CD14-positive monocyte (primary cell): ENCODE measurements at regions of chr6 and their contacts with region 1.

Region 1: DNA sequence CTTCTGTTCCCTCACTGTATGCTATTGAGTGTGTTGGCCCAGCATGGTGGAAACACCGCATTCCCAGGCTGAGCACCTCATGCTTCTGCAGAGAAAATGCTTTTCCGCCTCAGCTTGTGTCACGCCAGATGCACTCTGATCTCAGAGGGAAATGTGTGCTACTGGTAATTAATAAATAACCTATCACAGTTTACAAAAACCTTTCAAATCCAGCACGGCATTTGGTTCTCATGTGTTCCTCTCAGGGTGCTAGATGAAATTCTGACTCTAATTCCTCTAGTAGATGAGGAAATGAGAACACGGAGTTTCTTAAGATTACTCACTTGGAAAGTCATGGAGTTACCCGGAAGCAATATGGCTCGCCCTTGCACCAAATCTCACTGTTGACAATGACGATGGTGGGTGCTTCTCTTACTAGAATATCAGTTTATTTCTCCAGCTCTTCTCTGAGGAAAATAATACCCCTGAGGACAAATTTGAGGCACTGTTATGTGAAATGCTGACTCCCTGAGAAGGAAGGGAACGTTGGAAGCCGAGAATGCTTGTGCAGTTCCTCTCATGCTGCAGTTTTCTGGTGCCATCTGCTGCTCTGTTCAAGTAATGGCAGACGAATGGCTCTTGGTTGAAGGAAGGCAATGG is 116.6 kb downstream of the RNF144B start:
- DNase-seq: peak; percentile 59 to 85 (median 81)
- H3K4me3 ChIP-seq: peak overlapping the region; percentile 19 to 67 (median 63)
- H3K4me3 Mint-ChIP-seq: peak overlapping the region; percentile 73 to 89
- H3K27ac ChIP-seq: peak overlapping the region; percentile 75 to 87
- H3K27ac Mint-ChIP-seq: peak overlapping the region; percentile 92 to 99 (median 97)
- H3K4me1 ChIP-seq: peaks cover 30 to 33% of the 10 kb centered on the region in 2 donors
- H3K4me1 Mint-ChIP-seq: peaks cover 36% of the 10 kb centered on the region
- H3K27me3 ChIP-seq: no peaks in the 10 kb centered on the region
- H3K27me3 Mint-ChIP-seq: no peaks in the 10 kb centered on the region
- CTCF ChIP-seq: peak; percentile 94

Region 2: DNA sequence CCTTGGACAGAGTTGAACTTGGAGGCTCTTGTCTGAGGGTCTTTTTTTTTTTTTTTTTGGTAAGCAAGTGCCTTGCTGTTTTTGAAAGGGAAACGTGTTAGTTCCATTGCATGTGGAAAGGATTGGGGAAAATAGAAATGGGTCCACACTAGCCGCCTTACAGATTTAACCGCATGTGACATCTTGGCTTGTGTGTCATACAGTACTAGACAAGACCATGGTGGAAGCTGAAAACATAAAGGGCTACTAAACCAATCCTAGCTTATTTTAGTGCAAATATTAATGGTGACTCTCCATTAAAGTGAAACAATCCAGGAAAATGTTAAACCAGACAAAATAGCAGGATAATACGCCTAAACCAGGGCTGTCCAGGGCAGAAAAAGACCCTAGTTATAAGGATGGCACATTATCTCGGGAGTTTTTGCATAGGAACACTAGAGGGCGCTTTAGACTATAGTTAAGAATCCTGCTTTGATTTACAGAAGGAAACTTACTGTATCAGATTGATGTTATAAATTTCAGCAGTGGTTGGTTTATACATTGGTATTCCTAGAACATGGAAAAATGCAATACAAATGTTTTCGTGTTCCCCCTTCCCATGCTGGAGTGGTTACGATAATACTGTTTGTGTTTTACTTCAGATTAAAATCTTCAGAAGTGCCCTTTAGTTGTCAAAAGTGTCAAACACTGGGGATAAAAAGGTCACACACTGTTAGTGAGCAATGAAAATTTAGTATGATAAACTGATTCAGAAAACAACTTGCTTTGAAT is 179.6 kb before region 1 on chr6:
- intact Hi-C with region 1: loop called (anchors 2 kb)
- DNase-seq: peak; percentile 40 to 77 (median 64)
- H3K4me3 ChIP-seq: no peak overlapping the region
- H3K4me3 Mint-ChIP-seq: no peak overlapping the region
- H3K27ac ChIP-seq: no peak overlapping the region
- H3K27ac Mint-ChIP-seq: peak overlapping the region in 3 of 7 donors; percentile 27 to 63 (median 33)
- H3K4me1 ChIP-seq: peaks cover 32 to 36% of the 10 kb centered on the region in 2 donors
- H3K4me1 Mint-ChIP-seq: peaks cover 35% of the 10 kb centered on the region
- H3K27me3 ChIP-seq: no peaks in the 10 kb centered on the region
- H3K27me3 Mint-ChIP-seq: peaks cover 0 to 2% (median 0%) of the 10 kb centered on the region in 3 donors
- CTCF ChIP-seq: peak; percentile 88

Region 3: GRCh38 chr6:18392346-18392884 is 111.3 kb before region 1 on chr6:
- intact Hi-C with region 1: loop called in 1 of 2 experiments (anchors 10 kb)
- DNase-seq: peak in 1 of 3 donors; percentile 23
- H3K4me3 ChIP-seq: peak overlapping the region in 1 of 3 experiments; percentile 30
- H3K4me3 Mint-ChIP-seq: no peak overlapping the region
- H3K27ac ChIP-seq: no peak overlapping the region
- H3K27ac Mint-ChIP-seq: peak overlapping the region in 3 of 7 donors; percentile 15 to 18 (median 18)
- H3K4me1 ChIP-seq: peaks cover 37 to 80% of the 10 kb centered on the region in 2 donors
- H3K4me1 Mint-ChIP-seq: peaks cover 70% of the 10 kb centered on the region
- H3K27me3 ChIP-seq: no peaks in the 10 kb centered on the region
- H3K27me3 Mint-ChIP-seq: peaks cover 0 to 2% (median 1%) of the 10 kb centered on the region in 3 donors
- CTCF ChIP-seq: peak; percentile 14

Region 4: GRCh38 chr6:18432180-18432579 is 71.5 kb before region 1 on chr6:
- intact Hi-C with region 1: loop called in 1 of 2 experiments (anchors 10 kb)
- DNase-seq: peak in 2 of 3 donors; percentile 60 to 95
- H3K4me3 ChIP-seq: no peak overlapping the region
- H3K4me3 Mint-ChIP-seq: no peak overlapping the region
- H3K27ac ChIP-seq: peak overlapping the region in 1 of 2 donors; percentile 17
- H3K27ac Mint-ChIP-seq: peak overlapping the region in 5 of 7 donors; percentile 2 to 79 (median 28)
- H3K4me1 ChIP-seq: peaks cover 26 to 47% of the 10 kb centered on the region in 2 donors
- H3K4me1 Mint-ChIP-seq: peaks cover 60% of the 10 kb centered on the region
- H3K27me3 ChIP-seq: no peaks in the 10 kb centered on the region
- H3K27me3 Mint-ChIP-seq: no peaks in the 10 kb centered on the region
- CTCF ChIP-seq: no peak